ENCODE measurements at regions of chrX and their contacts with region 1.

Region 1: DNA sequence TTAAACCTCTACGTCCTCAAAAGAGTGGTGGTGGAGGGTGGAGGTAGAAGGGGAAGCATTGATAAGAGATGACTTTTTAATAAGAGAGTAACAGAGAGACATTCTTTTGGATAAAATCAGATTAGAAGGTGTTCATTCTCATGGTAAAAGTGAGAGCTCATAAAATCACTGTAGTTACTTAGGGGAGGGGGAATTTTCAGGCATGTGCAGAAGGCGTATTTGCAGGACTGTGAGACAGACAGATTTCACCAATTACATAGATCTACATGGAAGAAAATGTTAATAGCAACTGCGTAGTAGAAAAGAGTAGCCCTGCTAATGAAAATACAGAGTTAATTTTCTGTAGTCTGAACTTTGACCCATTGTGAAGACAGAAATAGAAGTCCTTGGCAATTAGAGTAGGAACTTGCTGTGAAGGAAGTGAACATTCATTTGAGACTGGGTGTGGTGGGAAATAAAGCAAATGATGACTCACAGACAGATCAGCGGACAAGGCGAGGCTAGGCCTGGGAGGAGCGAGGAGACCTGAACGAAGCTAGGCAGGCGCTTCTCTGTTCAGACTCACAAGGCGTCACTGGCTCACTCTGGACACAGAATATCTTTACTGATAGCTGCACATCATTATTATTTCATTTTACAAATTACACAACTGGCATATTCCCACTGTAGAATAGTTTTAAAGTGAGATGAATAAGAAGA is 57.2 kb upstream of the FAM9C start:
- DNase-seq: peak; percentile 54
- H3K4me3 ChIP-seq: no peak overlapping the region
- H3K27ac ChIP-seq: peak overlapping the region; percentile 82
- H3K4me1 ChIP-seq: peaks cover 29% of the 10 kb centered on the region
- H3K27me3 ChIP-seq: no peaks in the 10 kb centered on the region
- CTCF ChIP-seq: no peak

Region 2: GRCh38 chrX:12881914-12882313 is 219.7 kb before region 1 on chrX:
- intact Hi-C with region 1: no loop called
- DNase-seq: no peak
- H3K4me3 ChIP-seq: no peak overlapping the region
- H3K27ac ChIP-seq: no peak overlapping the region
- H3K4me1 ChIP-seq: no peaks in the 10 kb centered on the region
- H3K27me3 ChIP-seq: no peaks in the 10 kb centered on the region
- CTCF ChIP-seq: no peak

Region 3: GRCh38 chrX:13029831-13030771 is 71.5 kb before region 1 on chrX:
- intact Hi-C with region 1: loop called (anchors 5 kb)
- DNase-seq: no peak
- H3K4me3 ChIP-seq: no peak overlapping the region
- H3K27ac ChIP-seq: peak overlapping the region; percentile 85
- H3K4me1 ChIP-seq: peaks cover 23% of the 10 kb centered on the region
- H3K27me3 ChIP-seq: no peaks in the 10 kb centered on the region
- CTCF ChIP-seq: no peak

Region 4: GRCh38 chrX:13305108-13305507 is 203.5 kb after region 1 on chrX:
- intact Hi-C with region 1: no loop called
- DNase-seq: no peak
- H3K4me3 ChIP-seq: no peak overlapping the region
- H3K27ac ChIP-seq: no peak overlapping the region
- H3K4me1 ChIP-seq: no peaks in the 10 kb centered on the region
- H3K27me3 ChIP-seq: no peaks in the 10 kb centered on the region
- CTCF ChIP-seq: no peak

Measured in left ventricle myocardium inferior (tissue), 1 donor.